ENCODE measurements at regions of chr2 and their contacts with region 1.

Region 1: DNA sequence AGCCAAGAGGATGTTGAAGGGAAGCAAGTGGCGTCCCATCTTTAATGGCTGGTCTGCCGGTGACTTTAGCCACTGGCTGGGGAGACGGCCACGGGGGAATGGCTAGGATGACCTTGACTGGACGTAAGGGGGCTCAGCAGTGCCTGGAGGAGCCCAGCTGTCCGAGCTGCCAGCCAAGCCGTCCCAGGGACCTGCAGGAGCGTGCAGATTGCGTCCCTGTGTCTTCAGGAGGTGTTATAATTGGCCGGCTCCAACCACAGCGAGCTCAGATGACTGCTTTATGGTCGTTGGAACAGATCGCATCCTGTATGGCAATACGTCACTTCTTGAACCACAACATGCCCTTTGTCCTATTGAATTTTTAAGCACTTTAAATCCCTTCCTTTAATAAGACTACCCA is 204.6 kb downstream of the EIPR1 start:
- DNase-seq: peak; percentile 51

Region 2: DNA sequence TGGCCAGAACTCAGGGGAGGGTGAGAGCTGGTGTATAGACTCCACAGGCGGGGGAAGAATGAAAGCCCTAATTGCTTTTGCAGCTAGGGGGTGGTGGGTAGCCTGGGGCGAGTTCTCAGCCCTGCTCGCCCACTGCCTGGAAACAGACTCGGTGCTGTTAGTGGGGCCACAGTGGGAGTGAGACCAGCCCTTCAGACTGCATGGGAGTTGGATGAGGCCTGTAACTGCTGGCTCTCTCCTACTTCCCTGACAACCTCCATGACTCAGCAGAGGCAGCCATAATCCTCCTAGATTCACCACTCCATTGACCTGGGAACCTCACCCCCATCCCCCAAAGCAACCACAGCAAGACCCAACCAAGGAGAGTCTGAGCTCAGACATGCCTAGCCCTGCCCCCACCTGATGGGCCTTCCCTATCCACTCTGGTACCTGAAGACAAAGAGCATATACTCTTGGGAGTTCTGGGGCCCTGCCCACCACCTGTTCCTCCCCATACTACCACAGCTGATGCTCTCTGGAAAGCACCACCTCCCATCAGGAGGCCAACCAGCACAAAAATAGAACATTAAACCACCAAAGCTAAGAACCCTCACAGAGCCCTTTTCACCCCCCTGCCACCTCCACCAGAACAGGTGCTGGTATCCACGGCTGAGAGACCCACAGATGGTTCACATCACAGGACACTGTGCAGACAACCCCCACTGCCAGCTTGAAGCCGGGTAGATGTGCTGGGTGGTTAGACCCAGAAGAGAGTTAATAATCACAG is 21.7 kb before region 1 on chr2:
- intact Hi-C with region 1: loop called in 1 of 2 experiments (anchors 1 kb)
- DNase-seq: peak; percentile 30

Measured in posterior vena cava (tissue), 2 donors.